T-cell (primary cell): ENCODE measurements at regions of chr1 and their contacts with region 1.

Region 1: DNA sequence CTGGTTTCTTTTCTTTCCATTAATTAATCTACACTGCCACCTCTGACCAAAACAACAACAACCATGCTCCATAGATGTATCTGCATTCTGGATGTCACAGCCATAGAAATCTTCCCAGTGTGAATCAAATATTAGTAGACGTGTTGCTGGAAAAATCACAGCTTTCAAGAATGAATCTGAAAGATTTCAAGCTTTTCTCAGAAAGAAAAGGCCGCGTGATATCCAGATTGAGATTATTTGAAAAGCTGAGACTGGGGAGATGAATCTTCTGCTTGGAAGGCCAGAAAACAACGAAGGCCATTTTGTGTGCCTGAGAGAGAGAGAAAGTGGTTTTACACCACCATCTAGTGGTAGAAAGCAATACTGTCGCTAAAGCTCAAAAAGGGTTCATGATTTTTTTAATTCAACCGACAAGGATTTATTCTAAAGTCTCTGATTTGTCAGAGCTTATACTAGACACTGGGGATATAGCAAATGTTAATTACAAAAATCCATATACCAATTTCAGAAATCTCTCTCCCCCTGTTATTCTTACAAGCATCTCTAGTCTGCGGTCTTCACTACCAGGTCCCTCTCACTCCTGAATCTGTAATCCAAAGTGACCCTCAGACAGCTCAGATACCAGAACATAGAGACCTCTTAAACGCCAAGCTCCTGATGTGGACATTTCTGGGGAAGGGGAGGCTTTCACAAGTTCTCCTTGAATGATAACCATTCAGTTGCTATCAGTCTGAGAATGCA is 87.5 kb upstream of the SGIP1 start:
- DNase-seq: peak in 22 of 35 experiments; percentile 5 to 88 (median 24)
- ATAC-seq: peak; percentile 60 to 68 (median 64)
- H3K4me3 ChIP-seq: no peak overlapping the region
- H3K4me3 Mint-ChIP-seq: peak overlapping the region; percentile 13 to 64 (median 59)
- H3K27ac ChIP-seq: peak overlapping the region; percentile 91
- H3K27ac Mint-ChIP-seq: peak overlapping the region; percentile 97
- H3K4me1 ChIP-seq: peaks cover 13 to 14% of the 10 kb centered on the region in 2 experiments
- H3K4me1 Mint-ChIP-seq: peaks cover 22 to 24% (median 23%) of the 10 kb centered on the region in 3 donors
- H3K27me3 ChIP-seq: no peaks in the 10 kb centered on the region
- H3K27me3 Mint-ChIP-seq: peaks cover 0 to 4% of the 10 kb centered on the region in 2 donors

Region 2: GRCh38 chr1:66242646-66243547 is 203.5 kb before region 1 on chr1:
- CTCF ChIA-PET with region 1: interaction called, 64 to 320 read pairs
- POLR2A ChIA-PET with region 1: interaction called in 1 of 2 experiments, 4 read pairs
- DNase-seq: peak; percentile 28 to 85 (median 65)
- ATAC-seq: peak; percentile 76 to 90 (median 83)
- H3K4me3 ChIP-seq: no peak overlapping the region
- H3K4me3 Mint-ChIP-seq: no peak overlapping the region
- H3K27ac ChIP-seq: peak overlapping the region; percentile 35
- H3K27ac Mint-ChIP-seq: no peak overlapping the region
- H3K4me1 ChIP-seq: peaks cover 14 to 25% of the 10 kb centered on the region in 2 experiments
- H3K4me1 Mint-ChIP-seq: peaks cover 0 to 27% (median 21%) of the 10 kb centered on the region in 3 donors
- H3K27me3 ChIP-seq: no peaks in the 10 kb centered on the region
- H3K27me3 Mint-ChIP-seq: peaks cover 6 to 7% of the 10 kb centered on the region in 2 donors

Region 3: GRCh38 chr1:66271216-66271903 is 175.1 kb before region 1 on chr1:
- CTCF ChIA-PET with region 1: interaction called, 5 to 20 read pairs
- POLR2A ChIA-PET with region 1: interaction called, 3 to 4 read pairs
- DNase-seq: peak in 24 of 35 experiments; percentile 11 to 58 (median 32)
- ATAC-seq: peak in 2 of 4 experiments; percentile 6 to 71
- H3K4me3 ChIP-seq: no peak overlapping the region
- H3K4me3 Mint-ChIP-seq: peak overlapping the region in 1 of 3 donors; percentile 1
- H3K27ac ChIP-seq: no peak overlapping the region
- H3K27ac Mint-ChIP-seq: peak overlapping the region; percentile 61 to 87
- H3K4me1 ChIP-seq: peaks cover 29 to 37% of the 10 kb centered on the region in 2 experiments
- H3K4me1 Mint-ChIP-seq: peaks cover 47 to 56% (median 51%) of the 10 kb centered on the region in 3 donors
- H3K27me3 ChIP-seq: no peaks in the 10 kb centered on the region
- H3K27me3 Mint-ChIP-seq: no peaks in the 10 kb centered on the region

Region 4: GRCh38 chr1:66300972-66301451 is 145.4 kb before region 1 on chr1:
- CTCF ChIA-PET with region 1: interaction called in 1 of 2 experiments, 10 read pairs
- POLR2A ChIA-PET with region 1: no interaction called
- DNase-seq: peak in 19 of 35 experiments; percentile 3 to 70 (median 17)
- ATAC-seq: peak; percentile 82 to 88 (median 86)
- H3K4me3 ChIP-seq: peak overlapping the region; percentile 18 to 27
- H3K4me3 Mint-ChIP-seq: peak overlapping the region; percentile 72 to 77 (median 73)
- H3K27ac ChIP-seq: peak overlapping the region; percentile 77
- H3K27ac Mint-ChIP-seq: peak overlapping the region; percentile 91 to 97
- H3K4me1 ChIP-seq: peaks cover 12 to 24% of the 10 kb centered on the region in 2 experiments
- H3K4me1 Mint-ChIP-seq: peaks cover 34 to 45% (median 38%) of the 10 kb centered on the region in 3 donors
- H3K27me3 ChIP-seq: no peaks in the 10 kb centered on the region
- H3K27me3 Mint-ChIP-seq: no peaks in the 10 kb centered on the region

Region 5: GRCh38 chr1:66563094-66563800 is 116.8 kb after region 1 on chr1:
- CTCF ChIA-PET with region 1: no interaction called
- POLR2A ChIA-PET with region 1: no interaction called
- DNase-seq: no peak
- ATAC-seq: no peak
- H3K4me3 ChIP-seq: no peak overlapping the region
- H3K4me3 Mint-ChIP-seq: no peak overlapping the region
- H3K27ac ChIP-seq: no peak overlapping the region
- H3K27ac Mint-ChIP-seq: no peak overlapping the region
- H3K4me1 ChIP-seq: no peaks in the 10 kb centered on the region
- H3K4me1 Mint-ChIP-seq: no peaks in the 10 kb centered on the region
- H3K27me3 ChIP-seq: no peaks in the 10 kb centered on the region
- H3K27me3 Mint-ChIP-seq: peaks cover 11 to 14% of the 10 kb centered on the region in 2 donors

Region 6: GRCh38 chr1:67285780-67286488 is 839.5 kb after region 1 on chr1:
- CTCF ChIA-PET with region 1: no interaction called
- POLR2A ChIA-PET with region 1: no interaction called
- DNase-seq: peak in 1 of 35 experiments; percentile 12
- ATAC-seq: no peak
- H3K4me3 ChIP-seq: no peak overlapping the region
- H3K4me3 Mint-ChIP-seq: no peak overlapping the region
- H3K27ac ChIP-seq: no peak overlapping the region
- H3K27ac Mint-ChIP-seq: no peak overlapping the region
- H3K4me1 ChIP-seq: no peaks in the 10 kb centered on the region
- H3K4me1 Mint-ChIP-seq: peaks cover 0 to 9% (median 2%) of the 10 kb centered on the region in 3 donors
- H3K27me3 ChIP-seq: no peaks in the 10 kb centered on the region
- H3K27me3 Mint-ChIP-seq: no peaks in the 10 kb centered on the region